ENCODE measurements at regions of chr11 and their contacts with region 1.

Region 1: GRCh38 chr11:76598426-76598839 is 72.1 kb downstream of the LRRC32 start:
- DNase-seq: peak; percentile 65
- ATAC-seq: peak; percentile 87
- H3K4me3 Mint-ChIP-seq: no peak overlapping the region
- H3K27ac Mint-ChIP-seq: peak overlapping the region; percentile 63
- H3K4me1 Mint-ChIP-seq: peaks cover 19% of the 10 kb centered on the region
- H3K27me3 Mint-ChIP-seq: peaks cover 3% of the 10 kb centered on the region
- CTCF ChIP-seq: peak; percentile 56

Region 2: DNA sequence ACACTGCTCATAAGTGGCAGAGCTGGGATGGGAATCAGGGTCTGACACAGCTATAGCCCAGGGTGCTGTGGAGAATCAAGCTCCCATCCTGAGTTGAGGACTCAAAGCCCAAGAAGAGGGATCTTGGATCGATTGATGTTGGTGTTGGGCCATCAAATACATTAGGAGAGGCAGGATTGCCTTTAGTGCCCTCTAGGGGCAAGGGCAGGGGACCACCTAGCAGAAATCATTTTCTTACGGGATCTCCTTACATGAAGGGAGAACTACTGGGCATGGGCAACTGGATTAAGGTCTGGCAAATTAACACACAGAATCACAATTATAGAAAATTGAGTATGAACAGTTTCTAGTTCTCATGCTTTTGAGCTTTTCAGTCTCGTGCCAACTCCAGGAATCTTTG is 178.5 kb before region 1 on chr11:
- CTCF ChIA-PET with region 1: no interaction called
- POLR2A ChIA-PET with region 1: no interaction called
- intact Hi-C with region 1: no loop called
- DNase-seq: peak; percentile 31
- ATAC-seq: peak; percentile 48
- H3K4me3 Mint-ChIP-seq: no peak overlapping the region
- H3K27ac Mint-ChIP-seq: no peak overlapping the region
- H3K4me1 Mint-ChIP-seq: peaks cover 10% of the 10 kb centered on the region
- H3K27me3 Mint-ChIP-seq: peaks cover 5% of the 10 kb centered on the region
- CTCF ChIP-seq: peak; percentile 54

Region 3: DNA sequence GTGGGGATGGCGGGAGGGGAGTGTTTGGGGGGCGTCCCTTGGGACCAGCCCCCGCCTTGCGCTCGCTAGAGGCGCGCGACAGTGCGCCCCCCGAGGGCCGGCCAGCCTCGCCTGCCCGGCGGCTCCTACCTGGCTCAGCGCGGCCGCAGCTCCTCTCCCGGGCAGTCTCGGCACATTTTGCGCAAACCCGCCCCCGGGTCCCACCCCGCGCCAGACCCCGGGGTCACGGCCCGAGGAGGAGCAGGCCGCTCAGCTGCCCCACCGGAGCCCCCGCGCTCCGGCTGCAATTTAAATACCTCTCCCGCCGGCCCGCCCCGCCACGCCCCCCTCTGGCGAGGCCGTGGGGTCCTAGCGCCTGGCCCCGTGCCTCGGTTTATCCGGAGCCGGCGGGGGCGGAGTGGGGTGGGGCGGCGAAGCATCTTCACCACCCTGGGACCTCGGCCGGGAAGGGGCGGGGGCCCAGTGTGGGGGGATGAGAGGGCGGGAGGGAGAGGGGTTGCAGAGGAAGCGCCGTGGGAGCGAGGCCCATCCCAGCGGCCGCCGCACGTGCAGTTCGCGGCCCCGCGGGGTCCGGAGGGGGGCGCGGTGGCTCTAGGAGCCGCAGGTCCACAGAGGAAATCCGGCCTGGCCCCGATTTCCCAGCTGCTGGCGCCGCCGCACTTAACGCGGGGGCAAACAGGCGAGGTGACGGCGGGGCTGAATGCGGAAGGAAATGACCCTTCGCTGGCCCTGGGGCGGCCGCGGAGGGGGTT is 72.2 kb after region 1 on chr11 and contains the start of gene LRRC32:
- CTCF ChIA-PET with region 1: interaction called, 45 read pairs
- POLR2A ChIA-PET with region 1: no interaction called
- intact Hi-C with region 1: loop called (anchors 5 kb)
- DNase-seq: peak; percentile 49
- ATAC-seq: peak; percentile 8
- H3K4me3 Mint-ChIP-seq: peak within 1 kb of the TSS; percentile 73
- H3K27ac Mint-ChIP-seq: peak within 1 kb of the TSS; percentile 36
- H3K4me1 Mint-ChIP-seq: peaks cover 49% of the 10 kb centered on the region
- H3K27me3 Mint-ChIP-seq: peaks cover 19% of the 10 kb centered on the region
- CTCF ChIP-seq: peak; percentile 28
- total RNA-seq, gene LRRC32: 23.2 to 24.5 TPM